SK-N-SH (cell line): ENCODE measurements at regions of chr3 and their contacts with region 1.

Region 1: GRCh38 chr3:33131331-33132018 is 17.7 kb downstream of the CRTAP start:
- DNase-seq: peak; percentile 71
- H3K4me3 ChIP-seq: no peak overlapping the region; a peak in 1 of 4 replicates
- H3K27ac ChIP-seq: no peak overlapping the region
- H3K4me1 ChIP-seq: peaks cover 0 to 3% of the 10 kb centered on the region in 2 experiments; a peak in 2 of 4 replicates
- H3K27me3 ChIP-seq: no peaks in the 10 kb centered on the region
- CTCF ChIP-seq: peak; percentile 81
- EP300 ChIP-seq: no peak
- RAD21 ChIP-seq: peak; percentile 87

Region 2: DNA sequence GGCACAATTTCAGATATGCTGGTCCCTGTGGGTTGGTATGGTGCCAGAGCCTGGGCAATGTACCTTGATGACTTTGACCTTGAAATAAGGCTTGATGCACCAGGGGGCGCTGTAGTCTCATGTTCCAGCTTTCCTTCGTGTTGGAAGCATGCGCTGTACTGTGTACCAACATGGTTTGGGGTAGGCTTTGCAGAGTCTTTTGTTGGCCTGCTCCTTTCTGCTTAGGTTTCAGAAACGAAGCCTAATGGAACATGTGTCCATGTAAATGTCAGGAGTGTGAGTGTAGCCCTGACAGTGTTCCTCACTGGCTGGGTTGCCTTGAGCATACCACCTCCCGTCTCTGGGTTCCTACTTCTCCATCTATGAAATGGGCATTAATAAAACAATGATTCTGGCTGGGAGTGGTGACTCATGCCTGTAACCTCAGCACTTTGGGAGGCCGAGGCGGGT is 183.7 kb before region 1 on chr3:
- CTCF ChIA-PET with region 1: interaction called, 12 read pairs
- POLR2A ChIA-PET with region 1: no interaction called
- DNase-seq: peak; percentile 58
- H3K4me3 ChIP-seq: no peak overlapping the region; a peak in 1 of 4 replicates
- H3K27ac ChIP-seq: no peak overlapping the region
- H3K4me1 ChIP-seq: no peaks in the 10 kb centered on the region
- H3K27me3 ChIP-seq: no peaks in the 10 kb centered on the region
- CTCF ChIP-seq: peak; percentile 78
- EP300 ChIP-seq: no peak
- RAD21 ChIP-seq: peak; percentile 89

Region 3: GRCh38 chr3:33115024-33115768 is 16.3 kb before region 1 on chr3:
- CTCF ChIA-PET with region 1: interaction called, 15 read pairs
- POLR2A ChIA-PET with region 1: interaction called, 7 read pairs
- DNase-seq: no peak
- H3K4me3 ChIP-seq: peak overlapping the region; percentile 73 to 78; a peak in 3 of 4 replicates
- H3K27ac ChIP-seq: peak overlapping the region in 1 of 2 experiments; percentile 89; a peak in 2 of 4 replicates
- H3K4me1 ChIP-seq: peaks cover 7 to 14% of the 10 kb centered on the region in 2 experiments; a peak in 3 of 4 replicates
- H3K27me3 ChIP-seq: no peaks in the 10 kb centered on the region
- CTCF ChIP-seq: no peak
- EP300 ChIP-seq: no peak
- RAD21 ChIP-seq: no peak

Region 4: DNA sequence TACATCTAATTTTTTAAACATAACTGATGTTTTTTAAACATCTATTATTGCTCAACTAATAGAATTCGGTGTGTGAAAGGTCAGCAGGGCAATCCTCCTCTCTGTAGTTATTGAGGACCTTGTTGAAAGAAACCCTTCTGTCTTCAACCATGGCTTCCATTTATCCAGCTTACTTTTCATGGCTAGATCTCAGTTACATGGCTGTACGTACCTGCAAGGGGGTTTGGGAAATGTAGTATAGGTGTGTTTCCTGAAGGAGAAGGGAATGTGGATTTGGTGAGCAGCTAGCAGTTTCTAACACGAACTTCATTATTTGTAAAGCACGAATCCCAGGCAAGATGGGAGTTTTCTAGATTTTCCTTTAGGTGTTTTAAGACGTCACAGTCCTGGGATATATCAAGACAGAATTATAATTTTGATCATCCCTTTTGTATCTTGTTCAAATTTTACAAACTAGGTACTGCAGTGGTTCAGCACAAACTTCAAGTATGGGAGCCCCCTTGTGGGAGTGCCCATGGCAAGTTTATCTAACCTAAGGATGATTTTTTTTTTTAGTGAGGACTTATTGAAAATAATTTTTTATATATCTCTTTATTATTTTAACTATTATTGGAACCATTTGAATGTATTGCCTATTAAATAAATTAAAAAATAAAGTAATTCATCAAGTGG is 187.4 kb after region 1 on chr3:
- CTCF ChIA-PET with region 1: interaction called, 10 read pairs
- POLR2A ChIA-PET with region 1: no interaction called
- DNase-seq: no peak
- H3K4me3 ChIP-seq: no peak overlapping the region
- H3K27ac ChIP-seq: peak overlapping the region; percentile 20 to 74; a peak in 2 of 4 replicates
- H3K4me1 ChIP-seq: peaks cover 3 to 22% of the 10 kb centered on the region in 2 experiments; a peak in 3 of 4 replicates
- H3K27me3 ChIP-seq: no peaks in the 10 kb centered on the region
- CTCF ChIP-seq: peak; percentile 33
- EP300 ChIP-seq: no peak
- RAD21 ChIP-seq: peak; percentile 15; the same call in 1 of the 2 replicates

Region 5: DNA sequence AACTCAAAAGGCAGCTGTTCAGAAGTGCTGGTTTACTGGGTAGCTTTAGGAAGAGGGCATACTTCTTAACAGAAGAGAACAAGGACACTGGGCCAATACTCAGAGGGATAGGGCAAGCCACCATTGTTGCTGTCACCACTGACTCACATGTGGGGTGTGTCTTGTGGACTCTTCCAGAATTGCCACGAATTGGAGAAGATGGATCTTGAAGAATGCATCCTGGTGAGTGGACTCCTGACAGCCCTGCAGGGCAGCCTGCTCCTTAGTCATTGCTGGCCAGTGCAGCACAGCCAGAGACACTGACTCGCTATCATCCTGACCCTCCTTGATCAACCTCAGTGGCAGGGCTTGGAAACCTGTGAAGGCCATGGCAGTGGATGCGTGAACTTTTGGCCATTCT is 246.5 kb after region 1 on chr3:
- CTCF ChIA-PET with region 1: interaction called, 221 read pairs
- POLR2A ChIA-PET with region 1: interaction called, 7 read pairs
- DNase-seq: no peak
- H3K4me3 ChIP-seq: no peak overlapping the region
- H3K27ac ChIP-seq: peak overlapping the region in 1 of 2 experiments; percentile 33; a peak in 1 of 4 replicates
- H3K4me1 ChIP-seq: no peaks in the 10 kb centered on the region
- H3K27me3 ChIP-seq: no peaks in the 10 kb centered on the region
- CTCF ChIP-seq: no peak
- EP300 ChIP-seq: no peak
- RAD21 ChIP-seq: no peak